Gastrocnemius medialis (tissue), 4 donors: ENCODE measurements at regions of chr20 and their contacts with region 1.

Region 1: GRCh38 chr20:32674362-32674789 is 635 bp upstream of the C20orf203 start:
- DNase-seq: no peak
- ATAC-seq: no peak
- H3K4me3 ChIP-seq: no peak overlapping the region
- H3K27ac ChIP-seq: no peak overlapping the region
- H3K4me1 ChIP-seq: no peaks in the 10 kb centered on the region
- H3K27me3 ChIP-seq: no peaks in the 10 kb centered on the region
- CTCF ChIP-seq: peak; percentile 21 to 63 (median 55)
- POLR2A ChIP-seq: no peak

Region 2: GRCh38 chr20:32779500-32780211 is 105.3 kb after region 1 on chr20:
- in situ Hi-C with region 1: no loop called
- intact Hi-C with region 1: loop called (anchors 5 kb)
- DNase-seq: no peak
- ATAC-seq: no peak
- H3K4me3 ChIP-seq: no peak overlapping the region
- H3K27ac ChIP-seq: no peak overlapping the region
- H3K4me1 ChIP-seq: no peaks in the 10 kb centered on the region
- H3K27me3 ChIP-seq: no peaks in the 10 kb centered on the region
- CTCF ChIP-seq: no peak
- POLR2A ChIP-seq: no peak